ENCODE measurements at regions of chr3 and their contacts with region 1.

Region 1: GRCh38 chr3:46866720-46867549 is 3.7 kb upstream of the MYL3 start:
- DNase-seq: peak; percentile 84
- H3K4me3 ChIP-seq: no peak overlapping the region
- H3K27ac ChIP-seq: peak overlapping the region; percentile 36 to 60 (median 39)
- H3K4me1 ChIP-seq: peaks cover 13 to 20% (median 15%) of the 10 kb centered on the region in 4 donors
- H3K27me3 ChIP-seq: no peaks in the 10 kb centered on the region
- CTCF ChIP-seq: peak; percentile 88 to 95 (median 93)
- EP300 ChIP-seq: no peak
- POLR2A ChIP-seq: no peak

Region 2: DNA sequence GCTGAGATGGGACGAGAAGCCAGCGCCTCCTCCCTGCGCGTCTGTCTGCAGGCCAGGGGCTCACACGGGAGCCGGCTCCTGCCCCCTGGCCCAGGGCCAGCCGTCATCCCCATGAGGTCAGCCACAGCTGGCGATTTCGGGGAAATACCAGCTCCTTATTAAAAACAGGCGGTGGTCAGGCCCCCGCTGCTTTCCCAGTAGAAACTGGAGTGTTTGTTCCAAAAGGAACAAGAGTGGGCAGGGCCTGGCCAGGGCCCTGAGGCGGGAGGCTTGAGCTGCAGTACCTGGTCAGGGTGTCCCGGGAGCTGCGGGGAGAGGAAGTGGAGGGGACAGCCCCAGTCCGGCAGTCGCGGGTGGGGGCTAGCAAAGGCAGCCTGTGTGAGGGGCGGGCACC is 21.5 kb before region 1 on chr3:
- in situ Hi-C with region 1: no loop called
- intact Hi-C with region 1: no loop called
- DNase-seq: peak; percentile 65
- H3K4me3 ChIP-seq: peak overlapping the region; percentile 39 to 54 (median 46)
- H3K27ac ChIP-seq: peak overlapping the region; percentile 68 to 88 (median 74)
- H3K4me1 ChIP-seq: peaks cover 7 to 17% (median 13%) of the 10 kb centered on the region in 4 donors
- H3K27me3 ChIP-seq: no peaks in the 10 kb centered on the region
- CTCF ChIP-seq: no peak
- EP300 ChIP-seq: no peak
- POLR2A ChIP-seq: no peak

Region 3: DNA sequence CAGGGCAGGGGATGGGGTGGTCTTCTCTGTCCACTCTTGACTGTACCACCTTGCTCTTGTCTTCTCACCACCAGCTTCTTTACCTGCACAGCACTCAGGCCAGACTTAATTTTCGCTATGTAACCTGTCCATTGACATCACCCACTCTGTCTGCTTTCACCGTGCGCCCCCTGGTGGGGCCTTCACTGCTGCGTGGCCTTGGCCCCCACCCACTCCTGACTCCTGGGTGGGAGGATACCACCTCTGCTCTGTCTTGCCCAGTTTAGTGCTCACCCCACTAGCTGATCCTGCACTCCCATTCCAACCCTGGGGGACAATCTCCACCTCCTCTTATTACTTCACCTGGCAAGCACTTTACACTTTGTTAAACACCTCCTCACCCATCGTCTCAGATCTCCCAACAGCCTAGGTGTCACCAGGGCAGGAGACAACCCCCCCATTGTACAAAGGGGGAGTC is 28.3 kb after region 1 on chr3:
- in situ Hi-C with region 1: no loop called
- intact Hi-C with region 1: loop called (anchors 2 kb)
- DNase-seq: peak; percentile 74
- H3K4me3 ChIP-seq: no peak overlapping the region
- H3K27ac ChIP-seq: no peak overlapping the region
- H3K4me1 ChIP-seq: peaks cover 0 to 22% (median 22%) of the 10 kb centered on the region in 4 donors
- H3K27me3 ChIP-seq: peaks cover 35% of the 10 kb centered on the region
- CTCF ChIP-seq: peak; percentile 78 to 84 (median 82)
- EP300 ChIP-seq: no peak
- POLR2A ChIP-seq: no peak

Region 4: GRCh38 chr3:46909535-46910442 is 42.9 kb after region 1 on chr3:
- in situ Hi-C with region 1: no loop called
- intact Hi-C with region 1: loop called (anchors 5 kb)
- DNase-seq: peak; percentile 79
- H3K4me3 ChIP-seq: no peak overlapping the region
- H3K27ac ChIP-seq: no peak overlapping the region
- H3K4me1 ChIP-seq: peaks cover 4 to 18% (median 13%) of the 10 kb centered on the region in 4 donors
- H3K27me3 ChIP-seq: no peaks in the 10 kb centered on the region
- CTCF ChIP-seq: peak; percentile 82 to 87 (median 85)
- EP300 ChIP-seq: no peak
- POLR2A ChIP-seq: no peak

Region 5: GRCh38 chr3:47347217-47347801 is 480.4 kb after region 1 on chr3:
- in situ Hi-C with region 1: loop called in 2 of 4 experiments (anchors 25 kb)
- intact Hi-C with region 1: no loop called
- DNase-seq: peak; percentile 18
- H3K4me3 ChIP-seq: no peak overlapping the region
- H3K27ac ChIP-seq: no peak overlapping the region
- H3K4me1 ChIP-seq: peaks cover 0 to 8% (median 0%) of the 10 kb centered on the region in 4 donors
- H3K27me3 ChIP-seq: no peaks in the 10 kb centered on the region
- CTCF ChIP-seq: no peak
- EP300 ChIP-seq: no peak
- POLR2A ChIP-seq: no peak

Region 6: GRCh38 chr3:47370887-47371697 is 504.2 kb after region 1 on chr3:
- in situ Hi-C with region 1: loop called in 1 of 4 experiments (anchors 25 kb)
- intact Hi-C with region 1: no loop called
- DNase-seq: peak; percentile 23
- H3K4me3 ChIP-seq: no peak overlapping the region
- H3K27ac ChIP-seq: no peak overlapping the region
- H3K4me1 ChIP-seq: peaks cover 0 to under 1% (median under 1%) of the 10 kb centered on the region in 4 donors
- H3K27me3 ChIP-seq: no peaks in the 10 kb centered on the region
- CTCF ChIP-seq: peak in 3 of 5 experiments; percentile 36 to 60 (median 49)
- EP300 ChIP-seq: no peak
- POLR2A ChIP-seq: no peak

Measured in transverse colon (tissue), 4 donors.